Natural killer cell (primary cell): ENCODE measurements at regions of chr1 and their contacts with region 1.

Region 1: GRCh38 chr1:162561037-162561616 is 395 bp upstream of the UAP1 start:
- DNase-seq: peak; percentile 97 to 99
- ATAC-seq: peak; percentile 90 to 97 (median 90)
- H3K4me3 ChIP-seq: peak overlapping the region; percentile 79
- H3K4me3 Mint-ChIP-seq: peak overlapping the region; percentile 94
- H3K27ac ChIP-seq: peak overlapping the region; percentile 96
- H3K27ac Mint-ChIP-seq: peak overlapping the region; percentile 97 to 98
- H3K4me1 ChIP-seq: peaks cover 14% of the 10 kb centered on the region
- H3K4me1 Mint-ChIP-seq: peaks cover 45 to 48% of the 10 kb centered on the region in 2 donors
- H3K27me3 ChIP-seq: no peaks in the 10 kb centered on the region
- H3K27me3 Mint-ChIP-seq: no peaks in the 10 kb centered on the region
- CTCF ChIP-seq: no peak

Region 2: GRCh38 chr1:162168249-162168648 is 392.9 kb before region 1 on chr1:
- intact Hi-C with region 1: no loop called
- DNase-seq: no peak
- ATAC-seq: no peak
- H3K4me3 ChIP-seq: no peak overlapping the region
- H3K4me3 Mint-ChIP-seq: no peak overlapping the region
- H3K27ac ChIP-seq: no peak overlapping the region
- H3K27ac Mint-ChIP-seq: no peak overlapping the region
- H3K4me1 ChIP-seq: no peaks in the 10 kb centered on the region
- H3K4me1 Mint-ChIP-seq: no peaks in the 10 kb centered on the region
- H3K27me3 ChIP-seq: peaks cover 3% of the 10 kb centered on the region
- H3K27me3 Mint-ChIP-seq: peaks cover 19 to 40% of the 10 kb centered on the region in 2 donors
- CTCF ChIP-seq: no peak

Region 3: GRCh38 chr1:162305969-162306368 is 255.2 kb before region 1 on chr1:
- intact Hi-C with region 1: no loop called
- DNase-seq: no peak
- ATAC-seq: peak in 1 of 3 donors; percentile 57
- H3K4me3 ChIP-seq: no peak overlapping the region
- H3K4me3 Mint-ChIP-seq: no peak overlapping the region
- H3K27ac ChIP-seq: no peak overlapping the region
- H3K27ac Mint-ChIP-seq: no peak overlapping the region
- H3K4me1 ChIP-seq: no peaks in the 10 kb centered on the region
- H3K4me1 Mint-ChIP-seq: peaks cover 0 to 6% of the 10 kb centered on the region in 2 donors
- H3K27me3 ChIP-seq: no peaks in the 10 kb centered on the region
- H3K27me3 Mint-ChIP-seq: peaks cover 6% of the 10 kb centered on the region in 2 donors
- CTCF ChIP-seq: no peak

Region 4: DNA sequence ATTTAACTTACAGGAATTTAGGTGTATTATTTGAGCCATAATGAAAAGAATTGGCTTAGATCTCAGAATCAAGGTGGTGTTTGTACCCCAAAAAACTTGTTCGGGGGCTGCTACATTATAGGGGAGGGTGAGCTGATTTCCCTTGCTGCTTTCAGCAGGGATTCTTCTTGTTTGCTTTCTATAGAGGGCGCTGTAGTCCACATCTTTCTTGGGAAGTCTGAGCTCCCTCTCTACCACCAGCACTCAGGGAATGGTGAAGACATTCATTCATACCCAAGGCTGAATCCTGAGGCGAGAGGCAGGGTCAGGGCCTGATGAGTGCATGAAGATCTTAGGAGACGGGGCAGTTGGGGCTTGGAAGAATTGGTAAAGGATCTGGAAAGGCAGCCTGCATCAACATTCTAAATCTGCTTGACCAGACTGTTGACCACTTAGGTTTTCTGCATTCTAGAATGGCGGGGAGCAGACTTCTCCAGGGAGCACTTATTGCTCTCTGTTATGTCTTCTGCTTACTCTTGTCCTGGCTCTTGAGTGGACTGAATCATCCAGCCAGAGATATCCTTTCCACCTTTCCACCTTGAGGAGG is 203.4 kb before region 1 on chr1:
- intact Hi-C with region 1: no loop called
- DNase-seq: peak in 1 of 2 donors; percentile 25
- ATAC-seq: peak; percentile 52 to 73 (median 55)
- H3K4me3 ChIP-seq: no peak overlapping the region
- H3K4me3 Mint-ChIP-seq: no peak overlapping the region
- H3K27ac ChIP-seq: no peak overlapping the region
- H3K27ac Mint-ChIP-seq: no peak overlapping the region
- H3K4me1 ChIP-seq: peaks cover 11% of the 10 kb centered on the region
- H3K4me1 Mint-ChIP-seq: peaks cover 0 to 10% of the 10 kb centered on the region in 2 donors
- H3K27me3 ChIP-seq: no peaks in the 10 kb centered on the region
- H3K27me3 Mint-ChIP-seq: peaks cover 2 to 6% of the 10 kb centered on the region in 2 donors
- CTCF ChIP-seq: peak; percentile 73

Region 5: DNA sequence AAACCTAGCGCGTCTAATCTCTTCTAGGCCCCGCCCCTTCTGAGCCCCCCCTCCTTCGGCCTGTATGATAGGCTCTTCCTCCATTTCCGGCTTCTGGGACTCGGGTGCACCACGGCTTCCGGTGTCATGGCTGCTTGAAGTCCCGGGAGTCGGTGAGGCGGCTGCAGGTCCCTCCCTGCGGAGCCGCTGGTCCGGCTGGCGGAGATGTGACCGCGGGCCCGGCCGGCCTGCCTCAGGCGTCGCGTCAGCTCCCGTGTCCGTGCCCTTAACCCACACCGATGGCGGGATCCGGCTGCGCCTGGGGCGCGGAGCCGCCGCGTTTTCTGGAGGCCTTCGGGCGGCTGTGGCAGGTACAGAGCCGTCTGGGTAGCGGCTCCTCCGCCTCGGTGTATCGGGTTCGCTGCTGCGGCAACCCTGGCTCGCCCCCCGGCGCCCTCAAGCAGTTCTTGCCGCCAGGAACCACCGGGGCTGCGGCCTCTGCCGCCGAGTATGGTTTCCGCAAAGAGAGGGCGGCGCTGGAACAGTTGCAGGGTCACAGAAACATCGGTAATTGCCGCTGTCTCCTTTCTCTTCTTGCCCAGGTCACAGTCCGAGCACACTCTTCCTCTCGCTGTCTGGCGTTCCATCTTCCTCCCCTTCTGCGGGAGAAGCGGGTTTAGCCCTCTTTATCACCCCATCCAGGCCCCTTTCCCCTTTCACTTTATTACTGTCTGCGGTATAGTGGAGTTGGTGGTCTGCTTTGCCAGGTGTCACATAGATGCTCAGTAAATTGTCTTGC is 63.2 kb before region 1 on chr1 and contains the start of gene UHMK1:
- intact Hi-C with region 1: loop called (anchors 1 kb)
- DNase-seq: peak; percentile 80 to 95
- ATAC-seq: peak; percentile 97 to 98 (median 97)
- H3K4me3 ChIP-seq: peak within 1 kb of the TSS; percentile 65
- H3K4me3 Mint-ChIP-seq: peak within 1 kb of the TSS; percentile 93
- H3K27ac ChIP-seq: peak within 1 kb of the TSS; percentile 91
- H3K27ac Mint-ChIP-seq: peak within 1 kb of the TSS; percentile 88 to 96
- H3K4me1 ChIP-seq: peaks cover 13% of the 10 kb centered on the region
- H3K4me1 Mint-ChIP-seq: peaks cover 33 to 38% of the 10 kb centered on the region in 2 donors
- H3K27me3 ChIP-seq: no peaks in the 10 kb centered on the region
- H3K27me3 Mint-ChIP-seq: peaks cover 4 to 6% of the 10 kb centered on the region in 2 donors
- CTCF ChIP-seq: no peak
- total RNA-seq, gene UHMK1: 87.7 to 100 (median 99.1) TPM

Region 6: GRCh38 chr1:162548170-162548569 is 13.0 kb before region 1 on chr1:
- intact Hi-C with region 1: loop called (anchors 1 kb)
- DNase-seq: peak; percentile 51 to 53
- ATAC-seq: peak; percentile 94 to 99 (median 95)
- H3K4me3 ChIP-seq: no peak overlapping the region
- H3K4me3 Mint-ChIP-seq: peak overlapping the region; percentile 83
- H3K27ac ChIP-seq: peak overlapping the region; percentile 92
- H3K27ac Mint-ChIP-seq: peak overlapping the region; percentile 95 to 96
- H3K4me1 ChIP-seq: peaks cover 21% of the 10 kb centered on the region
- H3K4me1 Mint-ChIP-seq: peaks cover 27 to 32% of the 10 kb centered on the region in 2 donors
- H3K27me3 ChIP-seq: no peaks in the 10 kb centered on the region
- H3K27me3 Mint-ChIP-seq: no peaks in the 10 kb centered on the region
- CTCF ChIP-seq: no peak